Posterior vena cava (tissue), 2 donors: ENCODE measurements at regions of chr5 and their contacts with region 1.

Region 1: DNA sequence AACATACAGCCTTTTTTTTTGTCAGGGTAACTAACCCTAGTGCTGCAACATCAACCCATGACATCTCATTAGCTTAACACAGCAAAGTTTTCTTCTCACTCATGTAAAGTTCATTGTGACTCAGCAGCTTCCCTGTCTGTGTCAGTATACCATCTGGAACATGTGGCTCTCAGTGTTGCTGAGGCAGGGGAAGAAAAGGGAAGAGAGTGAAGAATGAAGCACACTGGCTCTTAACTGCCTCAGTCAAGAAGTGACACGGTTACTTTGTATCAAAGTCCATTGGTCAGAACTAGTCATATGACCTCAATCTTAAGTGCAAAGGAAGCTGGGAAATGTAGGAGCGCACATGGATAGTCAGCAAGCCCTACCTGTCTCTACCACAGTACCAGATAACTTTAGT is 185.0 kb upstream of the ELL2 start:
- DNase-seq: no peak

Region 2: GRCh38 chr5:94893412-94894135 is 1253.1 kb before region 1 on chr5:
- intact Hi-C with region 1: loop called in 1 of 2 experiments (anchors 10 kb)
- DNase-seq: no peak

Region 3: DNA sequence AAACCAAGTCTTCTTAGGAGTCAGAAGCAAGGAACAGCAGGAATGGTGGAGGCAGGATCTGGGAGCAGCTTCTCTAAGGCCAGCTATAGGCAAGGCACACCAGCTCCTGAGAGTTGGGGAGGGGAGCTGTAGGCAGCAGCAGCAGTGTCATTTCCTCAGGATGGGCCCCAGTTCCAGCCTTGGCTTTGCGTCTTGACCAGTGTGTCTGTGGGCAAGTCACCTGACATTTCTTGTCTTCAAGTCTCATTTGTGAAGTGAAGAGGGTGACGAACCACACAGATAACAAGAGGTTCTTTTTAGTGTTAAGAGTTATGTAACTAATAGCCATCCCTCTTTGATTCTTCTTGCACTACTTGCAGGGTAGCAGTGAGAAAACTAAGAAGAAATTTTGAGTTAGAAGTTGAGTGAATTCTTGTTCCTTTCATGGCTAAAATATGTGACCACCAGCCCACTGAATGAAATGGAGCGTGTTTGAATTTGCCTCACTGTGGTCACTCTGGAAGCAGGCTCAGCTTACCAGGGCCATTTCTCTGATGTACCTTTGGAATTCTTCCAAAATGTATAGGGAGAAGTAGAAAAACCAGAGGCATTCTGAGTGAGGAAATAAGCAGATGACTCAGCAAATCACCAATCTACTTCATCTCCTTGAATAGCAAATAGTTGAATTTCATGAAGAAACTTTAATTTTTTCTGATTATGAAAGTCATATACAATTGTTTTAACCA is 373.2 kb before region 1 on chr5:
- intact Hi-C with region 1: no loop called
- DNase-seq: no peak

Region 4: GRCh38 chr5:95961617-95962474 is 184.8 kb before region 1 on chr5 and contains the start of gene ELL2:
- intact Hi-C with region 1: no loop called
- DNase-seq: peak; percentile 100
- total RNA-seq, gene ELL2: 69.8 to 135 TPM